H1 (cell line): ENCODE measurements at regions of chr7 and their contacts with region 1.

Region 1: GRCh38 chr7:31443457-31443856 is 70.4 kb upstream of the ITPRID1 start:
- DNase-seq: no peak
- H3K4me3 ChIP-seq: no peak overlapping the region
- H3K27ac ChIP-seq: no peak overlapping the region
- H3K4me1 ChIP-seq: peaks cover 0 to 3% (median 0%) of the 10 kb centered on the region in 4 experiments; a peak in 1 of 7 replicates
- H3K27me3 ChIP-seq: peaks cover 0 to 2% (median under 1%) of the 10 kb centered on the region in 4 experiments; a peak in 1 of 7 replicates
- CTCF ChIP-seq: peak in 2 of 3 experiments; percentile 74 to 78; a peak in 3 of 4 replicates
- EP300 ChIP-seq: no peak
- POLR2A ChIP-seq: no peak
- RAD21 ChIP-seq: peak; percentile 92 to 97

Region 2: GRCh38 chr7:30647589-30647988 is 795.9 kb before region 1 on chr7:
- CTCF ChIA-PET with region 1: no interaction called
- POLR2A ChIA-PET with region 1: no interaction called
- DNase-seq: peak in 1 of 2 experiments; percentile 33
- H3K4me3 ChIP-seq: no peak overlapping the region
- H3K27ac ChIP-seq: no peak overlapping the region
- H3K4me1 ChIP-seq: peaks cover 2 to 7% (median 4%) of the 10 kb centered on the region in 4 experiments; a peak in 6 of 7 replicates
- H3K27me3 ChIP-seq: no peaks in the 10 kb centered on the region
- CTCF ChIP-seq: no peak
- EP300 ChIP-seq: no peak
- POLR2A ChIP-seq: no peak
- RAD21 ChIP-seq: no peak

Region 3: DNA sequence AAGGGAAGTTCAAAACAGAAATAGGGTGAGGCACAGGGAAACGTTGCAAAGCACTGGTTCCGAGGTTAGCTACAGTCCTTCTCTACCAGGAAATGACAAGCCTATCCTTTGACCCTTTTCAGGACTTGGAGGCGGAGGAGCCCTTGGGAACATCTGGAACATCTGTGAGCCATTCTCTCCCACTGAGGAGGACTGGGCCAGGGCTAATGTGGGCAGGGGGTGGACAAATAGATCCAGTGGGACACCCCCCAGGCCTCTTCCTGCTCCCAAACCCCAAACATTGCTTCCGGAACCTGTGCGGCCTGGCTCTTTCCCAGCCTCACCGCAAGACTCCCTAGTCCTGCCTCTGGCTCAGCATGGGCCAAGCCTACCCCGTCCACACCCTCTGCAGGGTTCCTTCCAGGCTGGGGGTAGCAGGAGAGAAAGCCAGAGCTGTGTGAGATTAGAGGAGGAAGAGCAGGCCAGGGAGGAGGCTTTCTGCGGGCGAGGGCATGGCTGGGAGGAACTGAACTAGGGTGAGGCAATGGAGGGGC is 443.2 kb before region 1 on chr7:
- CTCF ChIA-PET with region 1: no interaction called
- POLR2A ChIA-PET with region 1: no interaction called
- DNase-seq: no peak
- H3K4me3 ChIP-seq: no peak overlapping the region
- H3K27ac ChIP-seq: no peak overlapping the region
- H3K4me1 ChIP-seq: 0 out of 7 replicates have a peak, but pooled peaks cover 0 to 3% (median 0%) of the 10 kb centered on the region in 4 experiments
- H3K27me3 ChIP-seq: no peaks in the 10 kb centered on the region
- CTCF ChIP-seq: no peak
- EP300 ChIP-seq: no peak
- POLR2A ChIP-seq: no peak
- RAD21 ChIP-seq: no peak

Region 4: GRCh38 chr7:31134246-31135188 is 308.9 kb before region 1 on chr7:
- CTCF ChIA-PET with region 1: interaction called, 19 read pairs
- POLR2A ChIA-PET with region 1: no interaction called
- DNase-seq: peak; percentile 56 to 84
- H3K4me3 ChIP-seq: peak overlapping the region in 1 of 4 experiments; percentile 26; a peak in 1 of 8 replicates
- H3K27ac ChIP-seq: no peak overlapping the region
- H3K4me1 ChIP-seq: no peaks in the 10 kb centered on the region; a peak in 1 of 7 replicates
- H3K27me3 ChIP-seq: no peaks in the 10 kb centered on the region
- CTCF ChIP-seq: peak; percentile 50 to 83 (median 82)
- EP300 ChIP-seq: no peak
- POLR2A ChIP-seq: no peak
- RAD21 ChIP-seq: peak; percentile 87 to 93

Region 5: GRCh38 chr7:31336202-31337001 is 107.1 kb before region 1 on chr7:
- CTCF ChIA-PET with region 1: interaction called, 13 read pairs
- POLR2A ChIA-PET with region 1: no interaction called
- DNase-seq: peak in 1 of 2 experiments; percentile 87
- H3K4me3 ChIP-seq: peak overlapping the region; percentile 37 to 63 (median 53)
- H3K27ac ChIP-seq: no peak overlapping the region
- H3K4me1 ChIP-seq: no peaks in the 10 kb centered on the region
- H3K27me3 ChIP-seq: peaks cover 7 to 30% (median 18%) of the 10 kb centered on the region in 4 experiments; a peak in 6 of 7 replicates
- CTCF ChIP-seq: peak; percentile 71 to 82 (median 80)
- EP300 ChIP-seq: no peak
- POLR2A ChIP-seq: no peak
- RAD21 ChIP-seq: peak; percentile 41 to 69

Region 6: DNA sequence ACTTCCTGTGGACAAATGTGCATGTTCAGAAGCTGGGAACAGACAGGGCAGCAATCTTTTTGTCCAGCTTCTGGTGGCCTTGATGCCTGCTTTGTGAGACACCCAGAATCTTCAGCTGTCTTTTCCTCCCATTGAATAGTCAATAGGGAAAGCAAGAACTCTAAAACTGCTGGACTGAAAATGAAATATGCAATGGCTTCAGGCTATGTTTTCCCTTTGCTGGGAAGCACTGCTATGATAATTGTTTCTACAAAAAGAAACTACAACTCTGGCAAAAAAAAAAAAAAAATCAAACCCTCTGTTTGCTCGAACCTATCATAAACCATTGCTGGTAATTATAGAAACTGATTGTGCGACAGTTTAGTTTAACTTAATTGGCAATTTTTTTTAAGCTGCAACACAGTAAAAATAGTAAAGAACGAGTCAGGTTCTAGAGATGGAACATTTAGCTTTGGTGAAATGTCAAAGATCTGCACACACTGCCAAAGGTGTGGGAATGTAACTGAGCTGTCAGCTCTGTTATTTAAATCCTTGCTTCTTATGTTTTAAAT is 23.9 kb before region 1 on chr7:
- CTCF ChIA-PET with region 1: interaction called, 12 read pairs
- POLR2A ChIA-PET with region 1: no interaction called
- DNase-seq: no peak
- H3K4me3 ChIP-seq: no peak overlapping the region
- H3K27ac ChIP-seq: no peak overlapping the region
- H3K4me1 ChIP-seq: no peaks in the 10 kb centered on the region
- H3K27me3 ChIP-seq: peaks cover 0 to 1% (median 0%) of the 10 kb centered on the region in 4 experiments; a peak in 1 of 7 replicates
- CTCF ChIP-seq: no peak
- EP300 ChIP-seq: no peak
- POLR2A ChIP-seq: no peak
- RAD21 ChIP-seq: no peak

Region 7: GRCh38 chr7:31456646-31457368 is 13.3 kb after region 1 on chr7:
- CTCF ChIA-PET with region 1: interaction called, 31 read pairs
- POLR2A ChIA-PET with region 1: no interaction called
- DNase-seq: no peak
- H3K4me3 ChIP-seq: no peak overlapping the region
- H3K27ac ChIP-seq: no peak overlapping the region
- H3K4me1 ChIP-seq: peaks cover 0 to 4% (median 3%) of the 10 kb centered on the region in 4 experiments; a peak in 2 of 7 replicates
- H3K27me3 ChIP-seq: peaks cover 11 to 44% (median 27%) of the 10 kb centered on the region in 4 experiments
- CTCF ChIP-seq: no peak
- EP300 ChIP-seq: no peak
- POLR2A ChIP-seq: no peak
- RAD21 ChIP-seq: no peak

Region 8: GRCh38 chr7:31478721-31479120 is 35.3 kb after region 1 on chr7:
- CTCF ChIA-PET with region 1: interaction called, 21 read pairs
- POLR2A ChIA-PET with region 1: no interaction called
- DNase-seq: no peak
- H3K4me3 ChIP-seq: no peak overlapping the region
- H3K27ac ChIP-seq: no peak overlapping the region
- H3K4me1 ChIP-seq: peaks cover 0 to 5% (median 3%) of the 10 kb centered on the region in 4 experiments; a peak in 4 of 7 replicates
- H3K27me3 ChIP-seq: no peaks in the 10 kb centered on the region
- CTCF ChIP-seq: no peak
- EP300 ChIP-seq: no peak
- POLR2A ChIP-seq: no peak
- RAD21 ChIP-seq: no peak

Region 9: DNA sequence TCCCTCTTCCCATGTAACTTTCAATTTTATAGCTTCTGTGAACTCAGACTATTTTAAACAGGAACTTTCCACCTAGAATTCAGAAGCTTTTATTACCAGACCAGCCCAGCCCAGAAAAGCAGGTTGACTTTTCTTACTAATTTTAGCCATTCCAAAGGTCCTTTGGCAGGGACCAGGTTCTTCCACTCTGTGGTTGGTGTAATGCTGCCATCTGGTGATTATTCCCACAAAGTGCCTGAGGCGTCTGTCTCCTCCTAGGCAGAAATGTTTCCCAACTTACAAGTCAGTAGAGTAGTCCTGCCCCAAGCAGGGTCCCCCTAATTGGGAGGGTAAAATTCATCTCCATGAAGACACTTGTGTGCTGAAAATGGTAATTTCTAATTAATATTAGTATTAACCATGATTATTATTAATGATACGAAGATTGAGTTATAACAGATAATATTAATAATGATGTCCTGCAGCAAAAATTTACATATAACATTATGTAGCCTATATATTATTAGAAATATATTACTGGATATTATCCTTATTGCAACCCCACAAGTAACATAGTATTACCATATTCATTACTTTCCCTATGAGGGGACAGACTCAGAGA is 190.5 kb after region 1 on chr7:
- CTCF ChIA-PET with region 1: interaction called, 101 read pairs
- POLR2A ChIA-PET with region 1: no interaction called
- DNase-seq: peak in 1 of 2 experiments; percentile 60
- H3K4me3 ChIP-seq: no peak overlapping the region
- H3K27ac ChIP-seq: no peak overlapping the region
- H3K4me1 ChIP-seq: peaks cover 0 to 3% (median 1%) of the 10 kb centered on the region in 4 experiments; a peak in 2 of 7 replicates
- H3K27me3 ChIP-seq: no peaks in the 10 kb centered on the region
- CTCF ChIP-seq: peak; percentile 52 to 92 (median 83)
- EP300 ChIP-seq: no peak
- POLR2A ChIP-seq: no peak
- RAD21 ChIP-seq: peak; percentile 99